Breast epithelium (tissue), 4 donors: ENCODE measurements at regions of chr7 and their contacts with region 1.

Region 1: GRCh38 chr7:83313931-83314330 is 151.2 kb upstream of the PCLO start:
- DNase-seq: no peak
- H3K4me3 ChIP-seq: no peak overlapping the region
- H3K27ac ChIP-seq: no peak overlapping the region
- H3K4me1 ChIP-seq: no peaks in the 10 kb centered on the region
- H3K27me3 ChIP-seq: no peaks in the 10 kb centered on the region
- CTCF ChIP-seq: no peak
- POLR2A ChIP-seq: no peak

Region 2: GRCh38 chr7:83649708-83650107 is 335.8 kb after region 1 on chr7:
- intact Hi-C with region 1: loop called (anchors 5 kb)
- DNase-seq: no peak
- H3K4me3 ChIP-seq: no peak overlapping the region
- H3K27ac ChIP-seq: no peak overlapping the region
- H3K4me1 ChIP-seq: peaks cover 0 to 7% of the 10 kb centered on the region in 2 donors
- H3K27me3 ChIP-seq: no peaks in the 10 kb centered on the region
- CTCF ChIP-seq: no peak
- POLR2A ChIP-seq: no peak